ENCODE measurements at regions of chr22 and their contacts with region 1.

Region 1: DNA sequence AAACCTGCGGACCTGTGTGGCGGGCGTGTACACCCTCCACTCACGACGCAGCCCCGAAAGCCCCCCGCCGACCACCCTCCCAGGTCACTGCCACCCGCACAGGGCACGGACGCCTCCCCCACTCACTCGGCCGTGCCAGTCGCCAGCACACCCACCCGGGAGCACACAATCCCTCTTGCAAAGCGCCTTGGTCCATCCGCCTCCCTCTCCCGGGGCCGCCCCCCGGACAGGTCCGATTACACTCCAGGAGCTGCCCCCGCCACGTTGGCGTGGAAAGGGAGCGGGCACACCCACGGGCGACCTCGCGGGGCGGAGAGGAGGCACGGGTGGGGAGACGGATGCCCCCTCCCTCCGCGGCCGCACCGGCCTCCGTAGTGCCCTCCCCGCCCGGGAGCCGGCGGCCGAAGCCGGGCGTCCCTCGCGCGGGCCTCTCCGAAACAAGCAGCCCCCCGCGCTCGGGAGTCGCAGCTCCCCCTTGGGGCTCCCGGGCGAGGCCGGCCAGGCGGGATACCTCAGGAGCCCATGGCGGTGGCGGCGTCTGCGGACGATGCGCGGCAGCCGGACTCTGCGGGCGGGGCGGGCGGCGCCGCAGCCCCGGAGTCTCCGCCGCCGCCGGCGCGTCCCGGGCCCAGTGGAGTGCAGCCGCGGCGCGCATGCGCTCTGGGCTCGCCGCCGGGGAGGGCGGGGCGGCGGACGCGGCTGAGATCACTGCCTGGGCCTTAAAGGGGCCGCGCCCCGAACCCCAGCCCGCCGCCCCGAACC is at the start of gene TMEM184B:
- DNase-seq: peak; percentile 58
- ATAC-seq: peak; percentile 95
- H3K4me3 ChIP-seq: peak within 1 kb of the TSS; percentile 96
- H3K27ac ChIP-seq: peak within 1 kb of the TSS; percentile 97
- H3K4me1 ChIP-seq: peaks cover 19% of the 10 kb centered on the region
- H3K27me3 ChIP-seq: no peaks in the 10 kb centered on the region
- CTCF ChIP-seq: no peak
- POLR2A ChIP-seq: peak; percentile 86
- RAD21 ChIP-seq: 0 out of 2 replicates have a peak, but pooled peaks have one; percentile 6
- total RNA-seq, gene TMEM184B: 9.1 and 9.2 TPM in 2 replicates

Region 2: DNA sequence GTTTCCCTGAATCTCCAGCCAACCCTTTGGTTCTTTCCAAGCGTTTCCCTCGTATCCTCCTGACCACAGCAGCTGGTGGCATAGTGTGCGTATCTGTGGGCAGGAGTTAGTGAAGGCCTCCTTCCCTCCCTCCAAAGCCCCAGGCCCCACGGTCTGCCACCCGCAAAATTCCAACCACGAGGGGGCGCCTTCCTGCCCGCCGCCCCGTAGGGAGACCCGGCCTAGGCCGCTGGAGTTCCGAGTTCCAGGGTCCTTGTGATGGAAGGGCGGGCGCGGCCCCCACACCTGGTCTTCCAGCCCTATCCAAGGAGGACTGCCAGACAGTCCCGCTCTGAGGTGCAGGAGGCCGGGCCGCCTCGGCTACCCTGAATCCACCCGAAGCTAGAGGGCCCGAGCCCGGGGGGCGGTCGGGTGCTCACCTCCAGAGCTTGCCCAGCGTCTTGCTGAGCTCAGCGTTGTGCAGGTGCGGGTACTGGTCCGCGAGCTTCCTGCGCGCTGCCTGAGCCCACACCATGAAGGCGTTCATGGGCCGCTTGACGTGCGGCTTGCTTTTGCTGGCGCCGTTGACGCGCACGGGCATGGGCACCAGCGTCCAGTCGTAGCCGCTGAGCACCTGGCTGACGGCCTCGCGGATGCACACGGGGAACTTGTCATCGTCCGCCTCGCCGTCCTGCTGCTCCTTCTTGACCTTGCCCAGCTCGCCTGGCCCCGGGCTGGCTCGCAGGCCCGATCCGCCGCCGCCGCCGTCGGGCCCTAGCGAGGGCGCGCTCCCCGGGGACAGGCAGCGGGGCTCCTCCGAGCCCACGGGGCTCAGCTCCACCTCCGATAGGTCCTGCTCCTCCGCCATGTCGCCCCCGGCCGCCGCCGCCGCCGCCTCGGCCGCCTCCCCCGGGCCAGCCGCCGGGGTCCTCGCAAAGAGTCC is 289.4 kb before region 1 on chr22:
- CTCF ChIA-PET with region 1: no interaction called
- POLR2A ChIA-PET with region 1: interaction called, 13 read pairs
- dilution Hi-C with region 1: no loop called
- in situ Hi-C with region 1: no loop called
- intact Hi-C with region 1: no loop called
- DNase-seq: no peak
- ATAC-seq: no peak
- H3K4me3 ChIP-seq: no peak overlapping the region
- H3K27ac ChIP-seq: no peak overlapping the region
- H3K4me1 ChIP-seq: no peaks in the 10 kb centered on the region
- H3K27me3 ChIP-seq: no peaks in the 10 kb centered on the region
- CTCF ChIP-seq: 0 out of 2 replicates have a peak, but pooled peaks have one; percentile 17
- POLR2A ChIP-seq: no peak
- RAD21 ChIP-seq: no peak

Region 3: GRCh38 chr22:38338772-38339379 is 66.3 kb after region 1 on chr22:
- CTCF ChIA-PET with region 1: no interaction called
- POLR2A ChIA-PET with region 1: no interaction called
- dilution Hi-C with region 1: no loop called
- in situ Hi-C with region 1: no loop called
- intact Hi-C with region 1: no loop called
- DNase-seq: no peak
- ATAC-seq: peak; percentile 47
- H3K4me3 ChIP-seq: no peak overlapping the region
- H3K27ac ChIP-seq: no peak overlapping the region
- H3K4me1 ChIP-seq: peaks cover 5% of the 10 kb centered on the region
- H3K27me3 ChIP-seq: no peaks in the 10 kb centered on the region
- CTCF ChIP-seq: no peak
- POLR2A ChIP-seq: no peak
- RAD21 ChIP-seq: no peak